OCI-LY7 (cell line): ENCODE measurements at regions of chr4 and their contacts with region 1.

Region 1: GRCh38 chr4:140884431-140885058 is 128.4 kb upstream of the TBC1D9 start:
- DNase-seq: peak; percentile 86
- H3K4me3 ChIP-seq: no peak overlapping the region
- H3K27ac ChIP-seq: no peak overlapping the region
- H3K4me1 ChIP-seq: no peaks in the 10 kb centered on the region
- CTCF ChIP-seq: peak; percentile 98

Region 2: DNA sequence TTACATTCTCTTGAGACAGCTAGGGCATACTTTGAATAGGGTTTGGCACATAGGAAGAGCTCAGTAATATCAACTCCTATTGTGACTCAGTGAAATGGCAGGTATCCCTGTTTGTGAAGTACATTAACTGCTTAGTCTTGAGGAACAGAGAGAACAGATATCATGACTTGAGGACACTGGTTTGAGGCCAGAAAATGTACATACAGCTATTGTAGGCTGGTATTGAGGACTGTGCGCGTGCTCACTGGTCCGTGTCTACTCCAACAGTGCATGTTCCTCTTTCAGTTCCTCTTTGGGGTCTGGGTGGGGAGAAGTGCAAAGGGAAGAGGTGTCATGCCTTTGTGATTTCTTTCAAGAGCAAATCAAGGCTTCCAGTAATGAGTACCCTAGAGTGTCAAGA is 93.8 kb before region 1 on chr4:
- CTCF ChIA-PET with region 1: no interaction called
- POLR2A ChIA-PET with region 1: no interaction called
- intact Hi-C with region 1: no loop called
- DNase-seq: peak; percentile 94
- H3K4me3 ChIP-seq: peak overlapping the region; percentile 12
- H3K27ac ChIP-seq: peak overlapping the region; percentile 47
- H3K4me1 ChIP-seq: peaks cover 46% of the 10 kb centered on the region
- CTCF ChIP-seq: no peak

Region 3: DNA sequence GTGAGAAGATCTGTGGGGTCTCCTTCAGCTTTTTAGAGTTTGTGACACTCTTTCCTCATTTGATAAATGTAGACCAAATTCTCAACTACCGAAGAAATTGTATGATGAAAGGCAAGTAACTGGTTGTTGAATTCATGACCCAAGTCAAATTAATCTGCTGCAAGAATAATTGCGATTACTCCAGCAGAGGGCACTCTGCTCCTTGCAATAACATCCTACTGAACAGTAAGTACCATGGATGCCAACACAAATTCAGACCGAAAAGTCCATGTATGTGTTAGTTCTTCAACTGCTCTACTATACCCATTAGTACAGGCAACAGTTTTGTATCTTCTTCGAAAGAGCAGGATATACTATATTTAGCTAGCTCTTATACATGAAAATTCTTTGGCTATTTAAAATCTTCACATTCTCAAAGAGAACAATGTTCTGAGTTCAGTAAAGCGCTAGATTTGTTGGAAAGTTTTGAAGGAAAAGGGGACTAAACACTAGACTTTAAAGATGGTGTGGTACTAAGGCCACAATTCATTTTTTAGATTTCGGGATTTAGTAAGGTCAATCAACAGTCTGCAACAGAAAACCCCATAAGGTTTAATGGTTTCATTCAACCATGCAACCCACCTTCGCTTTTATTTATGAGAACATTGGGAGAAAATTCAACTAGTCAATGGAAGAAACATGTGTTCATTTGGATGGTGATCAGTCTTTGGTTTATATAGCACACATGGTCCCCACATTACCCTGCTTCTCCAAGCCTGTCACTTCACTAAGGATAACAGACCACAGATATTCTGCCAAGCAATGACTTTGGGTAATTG is 23.0 kb before region 1 on chr4:
- CTCF ChIA-PET with region 1: interaction called, 9 read pairs
- POLR2A ChIA-PET with region 1: interaction called, 9 read pairs
- intact Hi-C with region 1: loop called (anchors 1 kb)
- DNase-seq: peak; percentile 83
- H3K4me3 ChIP-seq: no peak overlapping the region
- H3K27ac ChIP-seq: no peak overlapping the region
- H3K4me1 ChIP-seq: peaks cover 13% of the 10 kb centered on the region
- CTCF ChIP-seq: peak; percentile 98

Region 4: DNA sequence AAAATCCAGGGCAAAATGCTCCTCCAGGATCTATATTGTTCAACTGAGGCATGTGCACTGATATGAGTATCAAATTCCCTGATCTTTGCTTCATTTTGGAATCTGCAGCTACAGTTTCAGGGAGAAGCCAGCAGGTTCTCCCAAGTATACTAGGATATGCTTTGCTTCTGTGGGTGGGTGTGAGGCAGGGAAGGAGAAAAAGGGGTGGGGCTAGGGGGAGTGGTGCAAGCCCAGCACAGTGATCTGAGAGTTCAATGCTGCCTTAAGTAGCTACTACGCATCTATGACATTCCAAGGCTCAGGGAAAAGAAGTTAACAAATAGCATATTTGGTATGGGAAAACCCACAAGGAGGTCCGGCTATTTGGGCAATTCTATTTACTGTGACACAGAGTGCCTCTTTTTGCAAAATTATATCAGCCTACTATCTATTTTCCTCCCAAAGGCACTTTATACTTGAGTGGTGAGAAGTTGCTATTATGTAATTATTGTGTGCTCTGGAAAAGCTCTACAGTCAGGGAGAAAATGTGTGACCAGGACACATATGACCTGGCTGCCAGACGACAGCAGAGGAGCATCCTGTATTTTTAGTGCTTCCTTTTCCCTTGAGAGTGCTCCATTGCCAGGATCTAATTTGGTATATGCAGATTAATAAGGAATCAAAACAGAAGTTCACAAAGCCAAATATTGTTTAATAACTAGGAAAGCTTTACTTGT is 86.7 kb after region 1 on chr4:
- CTCF ChIA-PET with region 1: no interaction called
- POLR2A ChIA-PET with region 1: no interaction called
- intact Hi-C with region 1: no loop called
- DNase-seq: no peak
- H3K4me3 ChIP-seq: no peak overlapping the region
- H3K27ac ChIP-seq: no peak overlapping the region
- H3K4me1 ChIP-seq: no peaks in the 10 kb centered on the region
- CTCF ChIP-seq: no peak

Region 5: DNA sequence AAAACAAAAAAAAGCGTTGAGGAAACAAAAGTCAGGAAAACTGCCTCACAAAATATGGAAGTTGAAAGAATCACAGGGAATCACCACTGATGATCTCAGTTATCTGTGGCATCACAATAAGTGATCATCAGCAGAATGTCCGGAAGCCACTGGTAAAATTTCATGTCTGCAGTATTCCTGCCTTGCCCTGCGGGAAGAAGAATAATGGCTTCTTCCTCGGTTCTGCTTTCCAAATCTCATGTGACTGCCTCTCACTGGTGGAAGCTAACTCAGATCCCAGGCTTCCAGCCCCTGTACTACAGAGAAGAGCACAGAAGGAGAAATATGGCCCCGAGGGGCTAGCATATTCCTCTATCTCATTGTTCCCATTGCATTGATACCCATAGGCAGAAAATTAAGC is 323.4 kb after region 1 on chr4:
- CTCF ChIA-PET with region 1: no interaction called
- POLR2A ChIA-PET with region 1: no interaction called
- intact Hi-C with region 1: no loop called
- DNase-seq: no peak
- H3K4me3 ChIP-seq: no peak overlapping the region
- H3K27ac ChIP-seq: no peak overlapping the region
- H3K4me1 ChIP-seq: no peaks in the 10 kb centered on the region
- CTCF ChIP-seq: no peak